WTC11 (cell line): ENCODE measurements at regions of chr11 and their contacts with region 1.

Region 1: DNA sequence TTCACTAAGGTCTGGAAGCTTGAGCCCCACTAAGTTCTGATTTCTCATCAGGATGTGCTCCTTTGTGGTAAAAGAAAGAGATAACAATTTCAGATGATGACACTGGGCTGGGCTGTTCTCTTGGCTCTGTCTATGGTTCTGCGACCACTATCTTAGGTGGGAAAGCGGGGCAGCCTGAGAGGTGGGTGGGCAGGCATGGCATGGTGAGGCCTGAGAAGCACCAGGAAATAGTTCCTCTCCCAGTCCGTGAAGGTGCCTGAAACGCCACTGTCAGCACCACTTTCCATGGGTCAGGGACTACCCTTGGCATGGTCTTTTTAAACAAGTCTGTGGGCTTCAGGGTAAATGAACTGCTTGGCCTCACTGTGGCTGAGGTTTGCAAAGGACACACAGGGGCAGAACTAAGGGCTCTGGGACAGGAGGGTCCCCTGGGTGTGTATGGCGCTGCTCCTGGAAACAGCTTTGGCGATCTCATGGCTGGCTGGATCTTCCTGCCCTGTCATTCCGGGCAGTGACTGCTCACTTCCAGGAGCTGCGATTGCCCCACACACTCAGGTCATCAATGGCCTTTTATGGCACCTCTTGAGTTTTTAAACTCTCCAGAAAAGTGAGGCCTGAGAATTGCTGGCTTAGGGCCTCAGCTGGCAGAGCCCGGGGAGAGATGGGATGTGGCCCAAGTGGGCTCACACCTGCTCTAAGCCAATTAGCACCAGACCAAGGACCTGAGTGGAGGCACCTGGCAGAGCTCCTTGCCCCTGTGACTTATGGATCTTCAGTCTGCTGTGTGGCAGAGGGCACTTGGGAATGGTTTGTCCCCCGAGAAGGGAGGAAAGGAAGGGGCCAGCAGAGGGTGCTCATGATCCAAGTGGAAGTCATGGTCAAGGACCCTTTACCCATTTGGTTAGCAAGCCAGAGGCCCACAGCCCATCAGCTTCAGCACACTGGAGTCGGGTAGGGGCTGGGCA is 55.6 kb upstream of the LYVE1 start:
- DNase-seq: peak; percentile 75
- ATAC-seq: peak; percentile 88
- H3K4me3 Mint-ChIP-seq: no peak overlapping the region
- H3K27ac Mint-ChIP-seq: no peak overlapping the region
- H3K4me1 Mint-ChIP-seq: no peaks in the 10 kb centered on the region
- H3K27me3 Mint-ChIP-seq: no peaks in the 10 kb centered on the region; the same call in 1 of the 2 replicates
- CTCF ChIP-seq: no peak

Region 2: DNA sequence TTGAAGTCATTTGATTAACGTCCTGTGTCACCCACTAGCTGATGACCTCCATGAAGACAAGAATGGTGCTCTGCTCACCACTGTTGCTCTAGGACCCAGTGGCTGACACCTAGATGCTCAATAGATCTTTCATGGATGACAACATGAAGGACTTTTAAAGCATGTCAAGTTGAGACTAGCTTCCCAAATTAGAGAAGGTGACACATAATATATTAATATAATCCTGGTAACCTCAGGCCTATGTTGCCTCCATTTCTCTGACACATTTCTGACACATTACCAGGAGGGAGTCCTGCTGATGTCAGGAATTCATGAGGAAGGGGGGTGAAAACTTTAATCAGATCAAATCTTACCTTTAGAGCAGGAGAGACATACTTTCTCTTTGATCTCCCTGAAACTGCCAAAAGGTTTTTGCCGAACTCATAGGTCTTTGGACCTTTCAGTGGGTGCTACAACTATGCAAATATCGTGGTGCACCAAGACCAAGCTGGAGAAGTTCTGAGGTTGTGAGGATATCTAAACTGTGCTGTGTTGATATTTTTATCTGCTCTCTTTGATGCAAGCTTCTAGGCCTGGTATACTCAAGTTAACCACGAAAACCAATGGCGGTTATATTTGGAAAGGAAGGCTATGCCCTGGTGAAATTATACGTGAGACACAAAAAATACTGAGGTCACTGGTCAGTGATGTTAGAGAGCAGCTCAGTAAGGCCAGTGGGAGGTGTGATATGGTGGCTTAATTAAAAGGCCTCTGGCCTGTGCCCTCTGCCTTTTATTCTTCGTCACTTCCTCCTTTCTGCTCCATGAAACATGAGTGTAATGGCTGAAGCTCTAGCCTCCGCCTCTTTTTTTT is 182.2 kb before region 1 on chr11:
- CTCF ChIA-PET with region 1: no interaction called
- POLR2A ChIA-PET with region 1: no interaction called
- DNase-seq: no peak
- ATAC-seq: no peak
- H3K4me3 Mint-ChIP-seq: no peak overlapping the region
- H3K27ac Mint-ChIP-seq: no peak overlapping the region
- H3K4me1 Mint-ChIP-seq: no peaks in the 10 kb centered on the region
- H3K27me3 Mint-ChIP-seq: peaks cover 2% of the 10 kb centered on the region; the same call in 1 of the 2 replicates
- CTCF ChIP-seq: no peak

Region 3: GRCh38 chr11:10499452-10499851 is 124.6 kb before region 1 on chr11:
- CTCF ChIA-PET with region 1: no interaction called
- POLR2A ChIA-PET with region 1: no interaction called
- DNase-seq: no peak
- ATAC-seq: no peak
- H3K4me3 Mint-ChIP-seq: no peak overlapping the region
- H3K27ac Mint-ChIP-seq: no peak overlapping the region
- H3K4me1 Mint-ChIP-seq: 0 out of 2 replicates have a peak, but pooled peaks cover 2% of the 10 kb centered on the region
- H3K27me3 Mint-ChIP-seq: peaks cover 2% of the 10 kb centered on the region; the same call in 1 of the 2 replicates
- CTCF ChIP-seq: no peak

Region 4: GRCh38 chr11:10606536-10607208 is 17.4 kb before region 1 on chr11:
- CTCF ChIA-PET with region 1: interaction called, 10 read pairs
- POLR2A ChIA-PET with region 1: no interaction called
- DNase-seq: no peak
- ATAC-seq: no peak
- H3K4me3 Mint-ChIP-seq: no peak overlapping the region
- H3K27ac Mint-ChIP-seq: no peak overlapping the region
- H3K4me1 Mint-ChIP-seq: peaks cover 19% of the 10 kb centered on the region
- H3K27me3 Mint-ChIP-seq: no peaks in the 10 kb centered on the region
- CTCF ChIP-seq: no peak

Region 5: DNA sequence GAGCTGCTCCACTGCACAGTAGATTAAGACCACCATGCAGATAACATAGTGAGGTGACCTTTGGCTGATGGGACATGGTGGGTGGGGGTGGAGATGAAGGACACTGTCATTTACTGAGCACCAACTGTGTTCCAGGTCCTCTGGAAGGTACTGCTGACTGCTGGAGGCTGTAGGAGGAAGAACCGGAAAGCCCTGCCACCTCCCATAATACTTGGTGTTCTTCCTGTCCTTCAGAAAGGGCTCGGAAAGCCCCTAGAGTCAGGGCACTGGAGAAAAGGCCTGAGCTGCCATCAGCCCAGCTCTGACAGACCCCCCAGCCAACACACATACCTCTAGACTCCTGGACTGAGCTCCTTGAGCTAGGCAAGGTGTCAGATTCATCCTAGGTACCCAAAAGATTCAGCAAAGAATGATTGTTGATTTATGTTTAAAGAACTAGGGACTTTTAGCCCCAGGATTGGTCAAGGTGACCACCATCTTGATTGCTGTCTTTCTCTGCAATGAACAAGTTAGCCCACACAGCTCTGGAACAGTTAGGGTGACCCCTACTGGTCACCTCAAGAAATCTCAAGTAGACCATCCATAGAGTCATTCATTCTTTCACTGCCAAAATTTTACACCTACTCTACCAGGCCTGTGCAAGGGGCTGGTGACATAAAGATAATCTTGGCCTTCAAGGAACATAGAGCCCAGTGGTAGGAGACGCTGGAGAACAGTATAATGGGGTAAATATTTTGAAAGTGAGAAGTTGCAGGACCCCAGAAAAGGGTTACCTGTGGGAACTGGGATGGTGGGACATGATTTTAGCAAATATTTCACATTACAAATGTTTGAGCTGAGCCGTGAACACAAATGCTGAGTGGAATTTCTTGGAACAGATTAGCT is 30.1 kb after region 1 on chr11:
- CTCF ChIA-PET with region 1: interaction called, 14 read pairs
- POLR2A ChIA-PET with region 1: no interaction called
- DNase-seq: no peak
- ATAC-seq: peak; percentile 84
- H3K4me3 Mint-ChIP-seq: no peak overlapping the region
- H3K27ac Mint-ChIP-seq: no peak overlapping the region
- H3K4me1 Mint-ChIP-seq: no peaks in the 10 kb centered on the region
- H3K27me3 Mint-ChIP-seq: no peaks in the 10 kb centered on the region
- CTCF ChIP-seq: peak; percentile 35; the same call in 1 of the 2 replicates

Region 6: GRCh38 chr11:10728789-10729472 is 104.9 kb after region 1 on chr11:
- CTCF ChIA-PET with region 1: interaction called, 12 read pairs
- POLR2A ChIA-PET with region 1: no interaction called
- DNase-seq: peak; percentile 67
- ATAC-seq: peak; percentile 95
- H3K4me3 Mint-ChIP-seq: peak overlapping the region; percentile 76
- H3K27ac Mint-ChIP-seq: no peak overlapping the region
- H3K4me1 Mint-ChIP-seq: peaks cover 4% of the 10 kb centered on the region
- H3K27me3 Mint-ChIP-seq: no peaks in the 10 kb centered on the region; the same call in 1 of the 2 replicates
- CTCF ChIP-seq: no peak

Region 7: GRCh38 chr11:10735481-10736475 is 111.7 kb after region 1 on chr11:
- CTCF ChIA-PET with region 1: interaction called, 14 read pairs
- POLR2A ChIA-PET with region 1: no interaction called
- DNase-seq: peak; percentile 96
- ATAC-seq: peak; percentile 100
- H3K4me3 Mint-ChIP-seq: peak overlapping the region; percentile 54
- H3K27ac Mint-ChIP-seq: no peak overlapping the region
- H3K4me1 Mint-ChIP-seq: peaks cover 6% of the 10 kb centered on the region
- H3K27me3 Mint-ChIP-seq: no peaks in the 10 kb centered on the region
- CTCF ChIP-seq: peak; percentile 94